Dendritic cell treated with granulocyte-macrophage colony-stimulating factor and Interleukin-4, amounts not matched to agents 40 ng/mL and 50 ng/mL, for 4 days (primary cell): ENCODE measurements at regions of chr4 and their contacts with region 1.

Region 1: GRCh38 chr4:107736924-107737448 is 17.0 kb upstream of the PAPSS1 start:
- H3K4me3 Mint-ChIP-seq: no peak overlapping the region
- H3K27ac Mint-ChIP-seq: no peak overlapping the region
- H3K4me1 Mint-ChIP-seq: peaks cover 8% of the 10 kb centered on the region
- H3K27me3 Mint-ChIP-seq: no peaks in the 10 kb centered on the region

Region 2: DNA sequence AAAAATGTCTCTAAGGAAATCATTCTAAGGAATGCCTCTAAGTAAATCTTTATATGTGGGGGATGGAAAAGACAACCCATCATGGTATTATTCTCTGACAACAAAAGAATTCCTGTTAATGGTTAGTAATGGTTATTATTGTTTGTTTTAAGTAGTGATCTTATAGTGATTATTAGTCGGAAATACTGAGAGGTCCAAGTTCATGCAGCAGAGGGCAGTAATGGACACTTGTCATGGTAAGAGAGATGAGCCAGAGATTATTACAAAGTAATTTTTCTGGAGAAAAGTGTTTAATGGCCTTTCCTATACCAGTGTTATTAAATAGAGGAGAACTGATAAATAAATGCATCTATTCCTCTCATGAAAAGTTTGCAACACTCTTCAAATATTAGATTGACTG is 692.8 kb before region 1 on chr4:
- intact Hi-C with region 1: loop called (anchors 10 kb)
- H3K4me3 Mint-ChIP-seq: no peak overlapping the region
- H3K27ac Mint-ChIP-seq: no peak overlapping the region
- H3K4me1 Mint-ChIP-seq: no peaks in the 10 kb centered on the region
- H3K27me3 Mint-ChIP-seq: peaks cover 11% of the 10 kb centered on the region

Region 3: GRCh38 chr4:107561481-107561880 is 175.5 kb before region 1 on chr4:
- intact Hi-C with region 1: no loop called
- H3K4me3 Mint-ChIP-seq: no peak overlapping the region
- H3K27ac Mint-ChIP-seq: no peak overlapping the region
- H3K4me1 Mint-ChIP-seq: no peaks in the 10 kb centered on the region
- H3K27me3 Mint-ChIP-seq: no peaks in the 10 kb centered on the region

Region 4: DNA sequence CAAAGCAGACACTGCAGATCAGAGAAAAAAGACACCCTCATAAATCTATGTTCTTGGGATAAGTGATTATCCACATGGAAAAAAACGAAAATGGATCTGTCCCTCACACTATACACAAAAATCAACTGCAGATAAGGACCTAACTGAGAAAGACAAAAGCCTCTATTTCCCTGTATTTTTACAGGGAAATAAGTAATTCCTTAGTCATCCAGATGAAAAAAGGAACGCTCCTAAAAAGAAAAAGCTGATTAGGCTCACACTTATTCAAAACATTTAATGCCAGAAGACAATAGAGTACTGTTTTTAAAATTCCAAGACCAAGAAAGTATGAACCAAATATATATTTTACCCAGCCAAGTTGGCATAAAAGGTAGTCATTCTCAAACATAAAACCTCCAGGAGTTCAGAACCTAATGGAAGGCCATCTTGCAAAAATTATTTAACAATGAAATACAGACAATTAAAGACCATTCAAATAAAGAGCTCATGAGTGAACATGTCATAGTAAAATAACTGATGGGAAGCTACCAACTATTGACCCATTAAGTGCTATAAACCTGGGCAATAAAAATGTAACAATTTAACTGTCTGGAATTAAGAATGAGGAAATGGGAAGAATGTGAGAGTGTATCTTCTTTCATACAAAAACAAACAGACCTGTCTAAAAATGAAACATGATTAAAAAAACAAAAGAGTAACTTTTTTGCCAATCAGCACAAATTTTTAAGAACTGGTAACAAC is 37.4 kb before region 1 on chr4:
- intact Hi-C with region 1: no loop called
- H3K4me3 Mint-ChIP-seq: no peak overlapping the region
- H3K27ac Mint-ChIP-seq: peak overlapping the region; percentile 23
- H3K4me1 Mint-ChIP-seq: peaks cover 31% of the 10 kb centered on the region
- H3K27me3 Mint-ChIP-seq: no peaks in the 10 kb centered on the region